CD4-positive, alpha-beta T cell (primary cell): ENCODE measurements at regions of chr4 and their contacts with region 1.

Region 1: GRCh38 chr4:118857760-118858159 is 21.8 kb upstream of the SEC24D start:
- DNase-seq: no peak
- ATAC-seq: no peak
- H3K4me3 ChIP-seq: no peak overlapping the region
- H3K4me3 Mint-ChIP-seq: no peak overlapping the region
- H3K27ac ChIP-seq: no peak overlapping the region
- H3K27ac Mint-ChIP-seq: no peak overlapping the region
- H3K4me1 ChIP-seq: no peaks in the 10 kb centered on the region
- H3K4me1 Mint-ChIP-seq: peaks cover 13% of the 10 kb centered on the region
- H3K27me3 ChIP-seq: no peaks in the 10 kb centered on the region
- H3K27me3 Mint-ChIP-seq: no peaks in the 10 kb centered on the region
- CTCF ChIP-seq: no peak

Region 2: DNA sequence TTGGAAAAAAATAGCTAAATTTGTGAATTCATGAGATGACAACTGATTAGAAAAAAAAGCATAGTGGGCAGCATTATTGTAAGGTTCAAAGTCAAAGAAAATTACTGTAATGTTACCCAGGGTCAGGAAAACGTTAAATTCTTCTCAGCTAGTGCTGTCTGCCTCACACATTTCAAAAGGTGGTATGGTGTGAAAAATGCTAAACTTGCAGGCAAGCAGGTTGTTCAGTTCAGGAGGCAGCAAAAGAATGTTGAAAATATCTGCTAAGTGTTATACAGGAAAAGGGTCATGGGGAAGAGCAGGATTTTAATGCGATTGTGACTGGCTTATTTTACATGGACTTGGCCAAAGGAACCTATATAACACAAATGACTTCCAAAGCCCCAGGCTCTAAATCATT is 1056.0 kb before region 1 on chr4:
- CTCF ChIA-PET with region 1: no interaction called
- POLR2A ChIA-PET with region 1: no interaction called
- intact Hi-C with region 1: no loop called
- DNase-seq: no peak
- ATAC-seq: no peak
- H3K4me3 ChIP-seq: no peak overlapping the region
- H3K4me3 Mint-ChIP-seq: no peak overlapping the region
- H3K27ac ChIP-seq: no peak overlapping the region
- H3K27ac Mint-ChIP-seq: no peak overlapping the region
- H3K4me1 ChIP-seq: no peaks in the 10 kb centered on the region
- H3K4me1 Mint-ChIP-seq: no peaks in the 10 kb centered on the region
- H3K27me3 ChIP-seq: no peaks in the 10 kb centered on the region
- H3K27me3 Mint-ChIP-seq: no peaks in the 10 kb centered on the region
- CTCF ChIP-seq: no peak

Region 3: GRCh38 chr4:118823107-118823870 is 34.5 kb before region 1 on chr4:
- CTCF ChIA-PET with region 1: interaction called, 3 read pairs
- POLR2A ChIA-PET with region 1: no interaction called
- intact Hi-C with region 1: loop called in 1 of 2 experiments (anchors 5 kb)
- DNase-seq: no peak
- ATAC-seq: no peak
- H3K4me3 ChIP-seq: no peak overlapping the region
- H3K4me3 Mint-ChIP-seq: no peak overlapping the region
- H3K27ac ChIP-seq: no peak overlapping the region
- H3K27ac Mint-ChIP-seq: no peak overlapping the region
- H3K4me1 ChIP-seq: no peaks in the 10 kb centered on the region
- H3K4me1 Mint-ChIP-seq: peaks cover 24% of the 10 kb centered on the region
- H3K27me3 ChIP-seq: no peaks in the 10 kb centered on the region
- H3K27me3 Mint-ChIP-seq: no peaks in the 10 kb centered on the region
- CTCF ChIP-seq: no peak

Region 4: GRCh38 chr4:118836301-118837120 is 21.2 kb before region 1 on chr4:
- CTCF ChIA-PET with region 1: no interaction called
- POLR2A ChIA-PET with region 1: no interaction called
- intact Hi-C with region 1: no loop called
- DNase-seq: peak in 13 of 14 experiments; percentile 10 to 90 (median 39)
- ATAC-seq: peak; percentile 75
- H3K4me3 ChIP-seq: peak overlapping the region; percentile 92
- H3K4me3 Mint-ChIP-seq: peak overlapping the region; percentile 100
- H3K27ac ChIP-seq: peak overlapping the region; percentile 72 to 91
- H3K27ac Mint-ChIP-seq: peak overlapping the region; percentile 88
- H3K4me1 ChIP-seq: peaks cover 18% of the 10 kb centered on the region
- H3K4me1 Mint-ChIP-seq: peaks cover 22% of the 10 kb centered on the region
- H3K27me3 ChIP-seq: no peaks in the 10 kb centered on the region
- H3K27me3 Mint-ChIP-seq: no peaks in the 10 kb centered on the region
- CTCF ChIP-seq: no peak